Psoas muscle (tissue), 8 donors: ENCODE measurements at regions of chr10 and their contacts with region 1.

Region 1: GRCh38 chr10:20228729-20229128 is 412.5 kb downstream of the PLXDC2 start:
- DNase-seq: no peak
- ATAC-seq: no peak
- H3K4me3 ChIP-seq: no peak overlapping the region
- H3K27ac ChIP-seq: no peak overlapping the region
- H3K4me1 ChIP-seq: no peaks in the 10 kb centered on the region
- H3K27me3 ChIP-seq: no peaks in the 10 kb centered on the region
- CTCF ChIP-seq: no peak

Region 2: GRCh38 chr10:18424200-18424599 is 1804.5 kb before region 1 on chr10:
- intact Hi-C with region 1: loop called in 1 of 2 experiments (anchors 10 kb)
- DNase-seq: no peak
- ATAC-seq: no peak
- H3K4me3 ChIP-seq: no peak overlapping the region
- H3K27ac ChIP-seq: no peak overlapping the region
- H3K4me1 ChIP-seq: no peaks in the 10 kb centered on the region
- H3K27me3 ChIP-seq: no peaks in the 10 kb centered on the region
- CTCF ChIP-seq: no peak

Region 3: DNA sequence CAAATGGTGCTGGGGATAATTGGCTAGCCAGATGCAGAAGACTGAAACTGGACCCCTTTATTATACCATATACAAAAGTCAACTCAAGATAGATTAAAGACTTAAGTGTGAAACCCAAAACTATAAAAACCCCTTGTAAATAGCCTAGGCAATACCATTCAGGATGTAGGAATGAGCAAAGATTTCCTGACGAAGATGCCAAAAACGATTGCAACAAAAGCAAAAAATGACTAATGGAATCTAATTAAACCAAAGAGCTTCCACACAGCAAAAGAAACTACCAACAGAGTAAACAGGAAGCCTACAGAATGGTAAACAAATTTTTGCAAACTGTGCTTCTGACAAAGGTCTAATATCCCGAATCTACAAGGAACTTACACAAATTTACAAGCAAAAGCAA is 443.4 kb before region 1 on chr10:
- intact Hi-C with region 1: no loop called
- DNase-seq: no peak
- ATAC-seq: no peak
- H3K4me3 ChIP-seq: no peak overlapping the region
- H3K27ac ChIP-seq: no peak overlapping the region
- H3K4me1 ChIP-seq: no peaks in the 10 kb centered on the region
- H3K27me3 ChIP-seq: no peaks in the 10 kb centered on the region
- CTCF ChIP-seq: no peak